ACHN (cell line): ENCODE measurements at regions of chr18 and their contacts with region 1.

Region 1: GRCh38 chr18:54444319-54444914 is 86.7 kb downstream of the C18orf54 start:
- DNase-seq: peak; percentile 62

Region 2: GRCh38 chr18:54636217-54636616 is 191.8 kb after region 1 on chr18:
- in situ Hi-C with region 1: no loop called
- DNase-seq: no peak

Region 3: DNA sequence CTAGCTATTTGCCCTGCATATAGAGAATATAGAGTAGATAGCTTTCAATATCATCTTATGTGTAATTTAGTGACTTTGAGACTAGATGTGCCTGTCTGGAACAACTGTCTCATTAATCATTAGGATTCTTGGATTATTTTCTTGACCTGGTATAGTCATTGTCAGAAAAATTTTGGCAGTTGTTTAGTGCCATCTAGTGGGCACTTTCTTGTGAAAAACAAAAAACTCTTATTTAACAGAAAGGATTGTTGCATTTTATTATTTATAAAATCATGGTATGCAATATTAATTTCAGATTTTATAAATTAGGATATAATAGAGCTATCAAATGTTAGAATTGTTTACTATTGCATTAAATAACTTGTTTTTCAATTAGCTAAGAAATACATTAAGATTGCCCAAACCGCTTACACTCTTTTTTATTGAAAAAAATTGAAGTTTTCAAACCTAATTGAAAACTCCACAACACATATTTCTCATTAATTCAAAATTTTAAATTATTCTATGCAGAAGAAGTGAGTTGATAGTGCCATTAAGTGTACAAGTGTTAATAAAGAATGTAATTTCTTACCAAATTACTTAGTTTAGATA is 227.0 kb after region 1 on chr18:
- in situ Hi-C with region 1: loop called (anchors 25 kb)
- DNase-seq: peak; percentile 49

Region 4: GRCh38 chr18:54860941-54861340 is 416.5 kb after region 1 on chr18:
- in situ Hi-C with region 1: no loop called
- DNase-seq: no peak